ENCODE measurements at regions of chr15 and their contacts with region 1.

Region 1: DNA sequence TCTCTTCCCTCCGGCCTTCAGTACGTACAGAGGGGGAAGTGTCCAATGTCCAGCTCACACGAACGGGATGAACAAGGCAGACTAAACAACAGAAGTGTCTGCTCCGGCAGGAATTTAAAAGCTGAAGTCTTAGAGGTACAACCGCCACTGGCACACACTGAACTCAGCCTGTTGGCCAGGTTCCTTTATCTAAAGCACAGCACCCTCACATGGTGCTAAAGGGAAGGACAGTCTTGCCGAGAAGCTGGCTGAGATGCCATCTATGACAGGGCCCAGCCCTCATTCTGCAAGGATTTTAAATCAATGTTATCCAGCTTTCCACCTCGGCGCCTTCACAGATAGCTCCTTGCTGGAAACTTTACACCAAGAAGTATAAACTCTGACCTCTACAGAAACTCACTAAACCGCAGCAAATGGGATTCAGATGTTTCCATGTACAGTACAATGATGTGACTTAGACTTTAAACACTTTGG is 2.8 kb downstream of the ADAMTS17 start:
- DNase-seq: peak; percentile 75 to 92 (median 86)
- H3K4me3 ChIP-seq: no peak overlapping the region
- H3K27ac ChIP-seq: no peak overlapping the region
- H3K4me1 ChIP-seq: peaks cover 4% of the 10 kb centered on the region in 2 donors
- H3K27me3 ChIP-seq: no peaks in the 10 kb centered on the region
- CTCF ChIP-seq: peak; percentile 67 to 89 (median 86)
- POLR2A ChIP-seq: no peak

Region 2: DNA sequence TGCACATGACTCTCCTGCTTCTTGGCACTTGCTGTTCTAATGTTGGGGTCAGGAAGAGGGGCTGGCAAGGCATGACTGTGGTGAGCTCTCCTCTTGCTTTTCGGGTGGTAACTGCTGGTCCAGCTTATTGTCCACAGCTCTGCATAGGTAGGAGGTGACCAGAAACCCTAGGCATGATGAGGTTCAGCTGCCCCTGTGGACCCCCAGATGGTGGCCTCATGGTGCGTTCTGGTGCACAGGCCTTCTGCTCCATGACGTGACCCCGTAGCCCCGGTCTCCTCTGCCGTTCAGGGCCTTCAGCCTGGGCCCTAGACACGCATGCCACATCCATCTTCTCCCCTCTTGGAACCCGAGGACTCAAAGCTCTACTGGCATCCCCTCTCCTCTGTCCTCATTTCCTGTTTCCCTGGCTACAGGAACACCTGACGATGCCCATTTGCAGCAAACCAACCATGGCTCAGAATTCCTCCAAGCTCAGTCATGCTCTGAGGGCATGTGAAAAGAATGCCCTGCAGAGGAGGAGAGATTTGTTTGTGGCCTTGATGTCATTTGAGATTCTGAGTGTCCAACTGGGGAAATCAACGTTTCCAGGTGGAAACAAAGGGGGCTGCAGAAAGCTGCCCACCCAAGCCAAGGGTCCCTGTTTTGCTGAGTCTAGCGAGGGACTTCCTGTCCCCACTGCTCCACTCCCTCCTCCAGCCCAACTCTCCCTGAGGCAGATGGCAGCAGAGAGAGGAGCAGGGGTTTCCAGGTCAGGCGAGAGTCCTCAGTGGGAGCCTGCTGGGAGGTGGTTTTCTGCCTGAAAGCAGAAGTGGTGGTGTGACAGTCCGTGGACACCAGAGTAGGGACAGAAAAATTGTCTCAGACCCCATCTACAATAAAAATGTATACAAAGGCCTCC is 407.1 kb before region 1 on chr15:
- intact Hi-C with region 1: loop called (anchors 5 to 10 kb)
- DNase-seq: no peak
- H3K4me3 ChIP-seq: no peak overlapping the region
- H3K27ac ChIP-seq: no peak overlapping the region
- H3K4me1 ChIP-seq: peaks cover 3 to 5% of the 10 kb centered on the region in 2 donors
- H3K27me3 ChIP-seq: no peaks in the 10 kb centered on the region
- CTCF ChIP-seq: no peak
- POLR2A ChIP-seq: no peak

Region 3: GRCh38 chr15:99961011-99961441 is 378.0 kb before region 1 on chr15:
- intact Hi-C with region 1: loop called in 1 of 2 experiments (anchors 10 kb)
- DNase-seq: peak in 6 of 7 donors; percentile 35 to 74 (median 64)
- H3K4me3 ChIP-seq: no peak overlapping the region
- H3K27ac ChIP-seq: no peak overlapping the region
- H3K4me1 ChIP-seq: no peaks in the 10 kb centered on the region
- H3K27me3 ChIP-seq: peaks cover 11% of the 10 kb centered on the region
- CTCF ChIP-seq: peak; percentile 8 to 56 (median 50)
- POLR2A ChIP-seq: no peak

Region 4: GRCh38 chr15:100131321-100132224 is 207.4 kb before region 1 on chr15:
- intact Hi-C with region 1: loop called (anchors 10 kb)
- DNase-seq: peak; percentile 59 to 76 (median 69)
- H3K4me3 ChIP-seq: peak overlapping the region in 1 of 4 donors; percentile 33
- H3K27ac ChIP-seq: peak overlapping the region in 1 of 5 donors; percentile 35
- H3K4me1 ChIP-seq: no peaks in the 10 kb centered on the region
- H3K27me3 ChIP-seq: no peaks in the 10 kb centered on the region
- CTCF ChIP-seq: peak; percentile 9 to 56 (median 46)
- POLR2A ChIP-seq: peak in 1 of 2 donors; percentile 10

Region 5: GRCh38 chr15:100216182-100216581 is 122.8 kb before region 1 on chr15:
- intact Hi-C with region 1: loop called in 1 of 2 experiments (anchors 5 kb)
- DNase-seq: peak in 6 of 7 donors; percentile 52 to 86 (median 71)
- H3K4me3 ChIP-seq: no peak overlapping the region
- H3K27ac ChIP-seq: peak overlapping the region in 4 of 5 donors; percentile 45 to 74 (median 64)
- H3K4me1 ChIP-seq: peaks cover 13 to 15% of the 10 kb centered on the region in 2 donors
- H3K27me3 ChIP-seq: no peaks in the 10 kb centered on the region
- CTCF ChIP-seq: no peak
- POLR2A ChIP-seq: no peak

Region 6: DNA sequence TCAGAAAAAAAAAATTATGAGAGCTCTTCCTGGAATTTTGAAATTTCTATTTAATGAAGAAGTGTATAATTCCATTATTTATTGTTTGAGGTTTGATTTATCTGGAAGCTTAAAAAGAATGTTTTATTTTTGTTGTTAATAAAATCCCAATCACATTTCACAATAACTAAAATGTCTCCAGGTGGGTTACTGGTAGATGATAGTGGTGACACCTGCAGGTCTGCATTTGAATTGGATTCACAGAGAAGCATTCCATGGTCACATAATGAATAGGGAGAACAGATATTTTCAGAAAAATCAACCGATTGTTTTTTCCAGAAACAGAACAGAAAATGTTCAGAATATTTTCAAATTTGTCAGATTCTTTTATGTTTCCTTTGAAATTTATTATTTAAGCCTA is 311.7 kb after region 1 on chr15:
- intact Hi-C with region 1: no loop called
- DNase-seq: no peak
- H3K4me3 ChIP-seq: no peak overlapping the region
- H3K27ac ChIP-seq: no peak overlapping the region
- H3K4me1 ChIP-seq: peaks cover 0 to 10% of the 10 kb centered on the region in 2 donors
- H3K27me3 ChIP-seq: no peaks in the 10 kb centered on the region
- CTCF ChIP-seq: no peak
- POLR2A ChIP-seq: no peak

Measured in adrenal gland (tissue), 19 donors.